ENCODE measurements at regions of chr18 and their contacts with region 1.

Region 1: GRCh38 chr18:21074336-21075323 is 37.0 kb downstream of the ROCK1 start:
- DNase-seq: no peak
- ATAC-seq: no peak
- H3K4me3 ChIP-seq: no peak overlapping the region
- H3K27ac ChIP-seq: no peak overlapping the region
- H3K4me1 ChIP-seq: no peaks in the 10 kb centered on the region
- H3K27me3 ChIP-seq: no peaks in the 10 kb centered on the region
- CTCF ChIP-seq: no peak
- POLR2A ChIP-seq: no peak
- RAD21 ChIP-seq: no peak

Region 2: DNA sequence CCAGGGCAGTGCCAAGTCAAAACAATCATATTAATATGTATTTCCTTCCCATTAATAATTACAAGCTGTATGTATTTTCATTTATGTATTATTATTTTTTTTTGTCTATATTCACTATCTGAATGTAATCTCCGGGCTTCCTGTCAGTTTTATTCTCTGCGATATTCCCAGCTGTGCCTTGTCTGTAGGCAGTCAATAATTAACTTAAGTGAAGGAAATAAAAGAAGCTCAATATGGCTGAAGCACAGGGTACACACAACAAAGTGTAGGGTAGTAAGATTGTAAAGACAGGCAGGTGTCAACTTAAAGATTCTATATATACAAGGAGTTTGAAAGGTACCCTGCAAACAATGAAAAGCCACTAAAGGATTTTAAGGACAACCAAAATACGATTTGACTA is 85.9 kb before region 1 on chr18:
- CTCF ChIA-PET with region 1: no interaction called
- POLR2A ChIA-PET with region 1: no interaction called
- dilution Hi-C with region 1: no loop called
- in situ Hi-C with region 1: no loop called
- intact Hi-C with region 1: no loop called
- DNase-seq: no peak
- ATAC-seq: no peak
- H3K4me3 ChIP-seq: no peak overlapping the region
- H3K27ac ChIP-seq: no peak overlapping the region
- H3K4me1 ChIP-seq: no peaks in the 10 kb centered on the region
- H3K27me3 ChIP-seq: no peaks in the 10 kb centered on the region
- CTCF ChIP-seq: no peak
- POLR2A ChIP-seq: no peak
- RAD21 ChIP-seq: no peak

Region 3: GRCh38 chr18:21059064-21059463 is 15.6 kb before region 1 on chr18:
- CTCF ChIA-PET with region 1: no interaction called
- POLR2A ChIA-PET with region 1: no interaction called
- dilution Hi-C with region 1: no loop called
- in situ Hi-C with region 1: no loop called
- intact Hi-C with region 1: loop called (anchors 2 kb)
- DNase-seq: no peak
- ATAC-seq: no peak
- H3K4me3 ChIP-seq: no peak overlapping the region
- H3K27ac ChIP-seq: no peak overlapping the region
- H3K4me1 ChIP-seq: no peaks in the 10 kb centered on the region
- H3K27me3 ChIP-seq: no peaks in the 10 kb centered on the region
- CTCF ChIP-seq: no peak
- POLR2A ChIP-seq: no peak
- RAD21 ChIP-seq: no peak

Region 4: DNA sequence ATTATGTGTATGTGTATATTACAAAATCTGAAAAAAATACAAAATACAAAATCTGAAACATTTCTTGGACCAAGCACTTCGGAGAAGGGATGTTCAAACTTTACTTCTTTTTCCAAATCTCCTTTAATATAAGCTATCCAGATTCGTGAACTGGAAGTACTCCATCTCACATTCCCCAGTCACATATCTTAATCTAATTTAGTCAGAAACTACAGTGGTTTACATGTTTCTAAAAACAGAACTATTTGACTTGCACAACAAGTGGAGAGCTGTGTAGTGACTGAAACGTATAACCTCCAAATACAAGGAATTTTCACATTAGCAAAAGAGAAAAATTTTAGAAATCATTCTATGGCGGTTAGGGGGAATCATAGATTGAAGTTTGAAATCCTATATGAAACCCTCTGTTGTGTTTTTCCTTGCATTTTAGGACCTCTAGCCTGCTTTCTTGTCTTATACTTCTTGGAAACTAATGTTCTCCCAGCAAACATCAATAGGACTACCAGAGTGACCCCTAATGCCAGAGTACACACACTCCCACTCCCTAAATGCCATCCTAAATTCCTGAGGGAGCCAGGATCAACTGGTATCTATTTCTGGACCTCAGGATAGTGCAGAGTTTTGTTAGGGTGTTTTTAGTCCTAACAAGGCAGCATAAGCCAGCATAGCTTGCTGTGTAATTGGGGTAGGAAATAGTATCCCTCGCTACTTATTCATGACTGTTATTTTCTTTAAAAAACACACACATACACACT is 67.2 kb after region 1 on chr18:
- CTCF ChIA-PET with region 1: no interaction called
- POLR2A ChIA-PET with region 1: no interaction called
- dilution Hi-C with region 1: no loop called
- in situ Hi-C with region 1: no loop called
- intact Hi-C with region 1: no loop called
- DNase-seq: peak; percentile 42
- ATAC-seq: peak; percentile 89
- H3K4me3 ChIP-seq: no peak overlapping the region
- H3K27ac ChIP-seq: peak overlapping the region; percentile 10; the same call in 1 of the 2 replicates
- H3K4me1 ChIP-seq: peaks cover 5% of the 10 kb centered on the region; the same call in 1 of the 2 replicates
- H3K27me3 ChIP-seq: no peaks in the 10 kb centered on the region
- CTCF ChIP-seq: no peak
- POLR2A ChIP-seq: no peak
- RAD21 ChIP-seq: no peak

Region 5: GRCh38 chr18:21257386-21257785 is 182.8 kb after region 1 on chr18:
- CTCF ChIA-PET with region 1: no interaction called
- POLR2A ChIA-PET with region 1: no interaction called
- dilution Hi-C with region 1: no loop called
- in situ Hi-C with region 1: no loop called
- intact Hi-C with region 1: loop called (anchors 10 kb)
- DNase-seq: peak; percentile 2
- ATAC-seq: peak; percentile 57
- H3K4me3 ChIP-seq: no peak overlapping the region
- H3K27ac ChIP-seq: no peak overlapping the region
- H3K4me1 ChIP-seq: no peaks in the 10 kb centered on the region
- H3K27me3 ChIP-seq: no peaks in the 10 kb centered on the region; the same call in none of the 2 replicates
- CTCF ChIP-seq: no peak
- POLR2A ChIP-seq: no peak
- RAD21 ChIP-seq: no peak

Region 6: DNA sequence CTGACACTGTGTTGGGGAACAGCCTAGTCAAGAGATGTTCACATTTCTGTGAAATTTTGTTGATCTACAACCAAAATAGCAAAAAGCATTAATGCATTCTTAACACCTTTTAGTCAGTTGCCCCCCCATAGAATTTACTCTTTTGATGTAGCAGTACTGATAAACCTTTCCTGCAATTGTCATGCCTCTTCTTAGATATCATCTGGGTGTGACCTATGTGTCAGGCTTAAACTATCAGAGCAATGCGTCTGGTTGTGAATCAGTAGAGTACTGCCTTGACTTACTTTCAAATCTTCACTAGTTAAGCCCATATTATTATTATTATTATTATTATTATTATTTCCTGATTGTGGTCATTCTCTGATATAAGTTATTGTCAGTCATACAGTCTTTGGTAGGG is 229.3 kb after region 1 on chr18:
- CTCF ChIA-PET with region 1: no interaction called
- POLR2A ChIA-PET with region 1: no interaction called
- dilution Hi-C with region 1: no loop called
- in situ Hi-C with region 1: no loop called
- intact Hi-C with region 1: no loop called
- DNase-seq: no peak
- ATAC-seq: no peak
- H3K4me3 ChIP-seq: no peak overlapping the region
- H3K27ac ChIP-seq: no peak overlapping the region
- H3K4me1 ChIP-seq: no peaks in the 10 kb centered on the region
- H3K27me3 ChIP-seq: peaks cover 11% of the 10 kb centered on the region
- CTCF ChIP-seq: no peak
- POLR2A ChIP-seq: no peak
- RAD21 ChIP-seq: no peak

Measured in IMR-90 (cell line).